Right cardiac atrium (tissue), 5 donors: ENCODE measurements at regions of chr6 and their contacts with region 1.

Region 1: DNA sequence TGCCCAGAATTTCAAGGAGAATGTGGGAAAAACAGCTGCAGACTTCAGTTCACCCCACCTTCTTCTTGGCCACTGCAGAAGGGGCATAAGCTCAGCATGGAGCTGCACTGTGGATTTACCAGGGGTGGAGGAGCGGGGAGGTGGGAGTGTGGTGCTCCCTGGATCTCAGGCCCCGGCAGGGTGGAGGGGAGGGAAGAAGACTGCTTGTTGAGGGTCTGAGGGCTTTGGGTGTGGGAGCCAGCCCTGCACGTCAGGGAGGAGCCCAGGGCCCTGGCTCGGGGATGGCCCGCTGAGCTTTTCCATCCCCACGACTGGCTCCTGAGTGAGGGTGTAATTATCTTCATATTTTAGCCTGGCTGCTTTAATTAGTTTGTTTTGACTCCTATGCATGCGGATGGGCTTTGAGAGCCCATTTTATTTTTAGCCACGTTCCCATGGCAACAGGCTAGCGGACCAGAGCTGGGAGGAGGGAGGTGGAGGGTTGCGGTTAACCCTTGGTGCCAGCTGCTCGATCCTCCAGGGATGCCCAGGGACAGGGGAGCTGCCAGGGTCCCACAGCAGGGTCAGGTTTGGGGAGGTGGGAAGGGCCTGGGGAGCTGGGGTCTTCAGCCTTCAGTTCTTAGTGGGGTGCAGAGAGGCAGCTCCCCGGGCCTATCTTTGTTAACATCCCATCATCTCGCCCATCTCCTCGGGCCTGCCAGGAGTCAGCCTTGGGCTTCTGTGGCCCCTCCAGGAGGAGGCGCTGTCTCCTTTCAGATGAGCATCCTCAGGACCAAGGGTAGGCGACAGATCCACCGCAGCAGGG is 68.2 kb downstream of the RAB44 start:
- DNase-seq: peak; percentile 83 to 93 (median 91)
- ATAC-seq: peak; percentile 80 to 81
- H3K4me3 ChIP-seq: no peak overlapping the region
- H3K27ac ChIP-seq: no peak overlapping the region
- H3K4me1 ChIP-seq: no peaks in the 10 kb centered on the region
- H3K27me3 ChIP-seq: no peaks in the 10 kb centered on the region

Region 2: GRCh38 chr6:36829919-36830544 is 64.2 kb after region 1 on chr6:
- intact Hi-C with region 1: loop called in 2 of 4 experiments (anchors 5 to 10 kb)
- DNase-seq: peak; percentile 82 to 93 (median 90)
- ATAC-seq: peak; percentile 30 to 60
- H3K4me3 ChIP-seq: no peak overlapping the region
- H3K27ac ChIP-seq: peak overlapping the region; percentile 62
- H3K4me1 ChIP-seq: peaks cover 28% of the 10 kb centered on the region
- H3K27me3 ChIP-seq: no peaks in the 10 kb centered on the region

Region 3: DNA sequence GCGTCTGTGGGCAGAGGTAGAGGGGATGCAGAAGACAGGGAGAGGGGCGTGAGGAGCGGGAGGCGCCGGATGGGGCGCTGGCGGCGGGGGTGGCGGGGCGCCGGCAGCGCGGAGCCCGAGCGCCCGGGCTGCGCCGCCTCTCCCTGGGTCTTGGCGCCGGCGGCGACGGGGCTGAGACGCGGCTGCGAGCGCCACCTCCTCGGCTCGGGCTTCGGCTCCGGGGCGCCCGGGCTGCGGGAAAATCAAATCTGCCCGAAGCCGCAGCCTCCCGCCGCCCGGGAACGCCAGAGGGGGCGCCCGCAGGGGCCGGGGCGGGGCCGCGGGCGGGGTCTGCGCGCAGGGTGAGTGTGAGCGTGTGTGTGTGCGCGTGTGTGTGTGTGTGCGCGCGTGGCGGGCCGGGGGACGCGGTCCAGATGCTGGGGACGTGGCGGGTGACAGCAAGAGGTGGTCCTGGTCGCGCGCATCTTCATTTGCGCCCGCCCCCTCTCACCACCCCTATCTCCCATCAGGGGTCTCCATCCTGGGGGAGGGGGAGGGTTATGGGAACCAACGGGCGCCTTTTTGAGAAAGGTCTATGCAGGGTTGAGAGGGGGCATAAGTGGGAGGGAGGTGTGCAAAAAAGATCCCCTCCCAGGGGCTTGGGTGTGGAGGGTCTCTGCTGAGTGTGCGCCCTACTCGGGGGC is 74.1 kb after region 1 on chr6:
- intact Hi-C with region 1: loop called in 1 of 4 experiments (anchors 10 kb)
- DNase-seq: peak; percentile 62 to 89 (median 87)
- ATAC-seq: peak; percentile 9 to 19
- H3K4me3 ChIP-seq: peak overlapping the region; percentile 59
- H3K27ac ChIP-seq: peak overlapping the region; percentile 66
- H3K4me1 ChIP-seq: peaks cover 8% of the 10 kb centered on the region
- H3K27me3 ChIP-seq: no peaks in the 10 kb centered on the region

Region 4: GRCh38 chr6:36851149-36851614 is 85.4 kb after region 1 on chr6:
- intact Hi-C with region 1: loop called in 3 of 4 experiments (anchors 5 kb)
- DNase-seq: no peak
- ATAC-seq: peak in 1 of 2 donors; percentile 0
- H3K4me3 ChIP-seq: no peak overlapping the region
- H3K27ac ChIP-seq: peak overlapping the region; percentile 60
- H3K4me1 ChIP-seq: peaks cover 15% of the 10 kb centered on the region
- H3K27me3 ChIP-seq: no peaks in the 10 kb centered on the region

Region 5: GRCh38 chr6:36985808-36986703 is 220.3 kb after region 1 on chr6 and contains the start of gene MTCH1:
- intact Hi-C with region 1: loop called in 1 of 4 experiments (anchors 10 kb)
- DNase-seq: peak; percentile 92 to 97 (median 96)
- ATAC-seq: peak; percentile 95 to 97
- H3K4me3 ChIP-seq: peak within 1 kb of the TSS; percentile 88
- H3K27ac ChIP-seq: peak within 1 kb of the TSS; percentile 87
- H3K4me1 ChIP-seq: peaks cover 15% of the 10 kb centered on the region
- H3K27me3 ChIP-seq: no peaks in the 10 kb centered on the region
- total RNA-seq, gene MTCH1: 217 to 249 (median 227) TPM

Region 6: DNA sequence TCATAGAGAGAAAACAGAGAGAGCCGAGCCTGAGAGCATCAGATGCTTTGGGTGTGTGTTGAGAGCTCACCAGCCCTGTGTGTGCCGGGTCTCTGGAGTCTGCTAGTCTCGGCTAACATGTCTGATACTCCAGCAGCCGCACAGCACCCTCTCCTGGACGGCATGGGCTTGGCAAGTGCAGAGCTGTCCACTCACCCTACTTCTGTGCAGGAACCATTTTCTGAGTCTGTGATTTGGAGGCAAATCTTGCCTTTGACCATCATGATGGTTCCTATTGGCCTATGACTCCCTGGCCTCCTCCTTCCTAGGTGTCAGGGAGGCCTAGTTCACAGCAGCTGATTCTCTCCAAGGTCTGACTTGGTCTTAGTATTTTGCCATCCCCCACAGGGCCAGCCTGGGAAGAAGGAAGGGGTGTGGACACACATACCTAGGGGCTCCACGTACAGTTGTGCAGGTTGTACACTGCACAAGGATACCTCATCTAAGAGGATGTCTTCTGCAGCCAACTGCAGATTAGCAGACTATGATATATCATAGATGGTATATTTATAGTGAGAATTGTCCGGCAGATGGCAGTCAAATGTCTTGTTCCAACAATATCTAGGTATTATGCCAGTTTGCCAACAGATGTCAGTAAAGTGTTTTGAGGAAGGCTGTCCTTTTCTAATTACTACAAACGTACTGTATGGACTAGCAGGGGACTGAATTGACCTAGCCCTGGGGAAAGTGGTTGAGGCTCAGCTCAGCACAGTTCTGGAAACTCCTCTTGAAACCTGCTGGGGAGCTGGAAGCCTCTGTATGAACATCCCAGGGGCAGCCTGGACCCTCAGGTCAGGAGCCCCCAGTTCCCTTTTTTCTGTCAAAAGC is 252.6 kb after region 1 on chr6:
- intact Hi-C with region 1: loop called in 3 of 4 experiments (anchors 10 kb)
- DNase-seq: peak; percentile 90 to 96 (median 96)
- ATAC-seq: peak; percentile 95 to 96
- H3K4me3 ChIP-seq: no peak overlapping the region
- H3K27ac ChIP-seq: peak overlapping the region; percentile 15
- H3K4me1 ChIP-seq: peaks cover 3% of the 10 kb centered on the region
- H3K27me3 ChIP-seq: no peaks in the 10 kb centered on the region

Region 7: GRCh38 chr6:37207903-37208456 is 442.2 kb after region 1 on chr6:
- intact Hi-C with region 1: loop called in 1 of 4 experiments (anchors 10 kb)
- DNase-seq: peak; percentile 82 to 91 (median 87)
- ATAC-seq: peak; percentile 64 to 71
- H3K4me3 ChIP-seq: no peak overlapping the region
- H3K27ac ChIP-seq: no peak overlapping the region
- H3K4me1 ChIP-seq: no peaks in the 10 kb centered on the region
- H3K27me3 ChIP-seq: no peaks in the 10 kb centered on the region

Region 8: DNA sequence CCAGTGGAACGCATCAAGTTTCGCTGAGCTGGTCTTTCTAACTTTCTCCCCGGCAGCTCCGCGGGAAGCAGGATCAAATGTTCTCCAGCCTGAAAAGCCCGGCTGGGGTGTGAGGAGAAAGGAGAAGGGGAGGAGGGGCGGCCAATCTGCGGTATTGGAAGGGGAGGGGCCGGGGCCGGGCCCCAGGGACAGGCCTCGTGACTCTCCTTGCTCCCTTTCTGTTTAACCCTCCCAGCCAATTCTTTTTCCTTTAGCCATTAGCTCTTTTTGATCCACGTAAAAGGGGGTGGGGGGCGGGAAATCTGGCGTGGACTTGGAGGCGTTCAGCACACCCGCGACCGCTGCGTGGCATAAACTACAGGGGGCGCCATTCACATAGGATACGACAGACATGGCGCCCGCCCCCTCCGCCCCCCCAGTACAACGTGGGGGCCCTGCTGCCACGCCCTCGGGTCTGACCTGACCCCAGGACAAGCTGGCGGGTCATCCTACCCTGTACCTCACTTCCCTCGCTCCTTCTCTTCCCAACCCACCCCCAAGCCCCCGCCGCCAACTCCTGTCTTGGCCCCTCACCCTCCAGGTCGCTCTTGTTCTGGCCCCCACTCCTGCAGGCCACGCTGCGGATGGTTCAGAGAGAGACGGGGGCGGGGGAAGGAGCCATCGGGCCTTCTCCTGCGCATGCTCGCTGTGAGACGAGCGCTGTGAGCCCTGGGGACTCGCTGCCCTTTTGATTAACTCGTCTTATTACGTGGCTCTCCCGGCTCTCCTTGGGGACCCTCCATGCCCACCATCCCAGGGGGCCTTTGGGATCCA is 939.6 kb after region 1 on chr6:
- intact Hi-C with region 1: no loop called
- DNase-seq: peak; percentile 87 to 94 (median 91)
- ATAC-seq: peak; percentile 92 to 94
- H3K4me3 ChIP-seq: peak overlapping the region; percentile 53
- H3K27ac ChIP-seq: peak overlapping the region; percentile 71
- H3K4me1 ChIP-seq: no peaks in the 10 kb centered on the region
- H3K27me3 ChIP-seq: no peaks in the 10 kb centered on the region